AG04450 (cell line): ENCODE measurements at regions of chr20 and their contacts with region 1.

Region 1: GRCh38 chr20:3710703-3711483 is 1.5 kb downstream of the SIGLEC1 start:
- DNase-seq: no peak
- H3K4me3 ChIP-seq: no peak overlapping the region
- H3K27ac ChIP-seq: no peak overlapping the region
- H3K27me3 ChIP-seq: peaks cover 13% of the 10 kb centered on the region
- CTCF ChIP-seq: peak; percentile 93

Region 2: GRCh38 chr20:3646651-3647050 is 64.2 kb before region 1 on chr20:
- CTCF ChIA-PET with region 1: no interaction called
- POLR2A ChIA-PET with region 1: no interaction called
- DNase-seq: no peak
- H3K4me3 ChIP-seq: no peak overlapping the region
- H3K27ac ChIP-seq: no peak overlapping the region
- H3K27me3 ChIP-seq: no peaks in the 10 kb centered on the region
- CTCF ChIP-seq: no peak

Region 3: GRCh38 chr20:3670511-3670910 is 40.4 kb before region 1 on chr20:
- CTCF ChIA-PET with region 1: interaction called, 110 read pairs
- POLR2A ChIA-PET with region 1: no interaction called
- DNase-seq: no peak
- H3K4me3 ChIP-seq: no peak overlapping the region
- H3K27ac ChIP-seq: no peak overlapping the region
- H3K27me3 ChIP-seq: no peaks in the 10 kb centered on the region
- CTCF ChIP-seq: peak; percentile 38; the same call in 1 of the 2 replicates

Region 4: GRCh38 chr20:3686867-3687321 is 24.0 kb before region 1 on chr20:
- CTCF ChIA-PET with region 1: interaction called, 16 read pairs
- POLR2A ChIA-PET with region 1: interaction called, 4 read pairs
- DNase-seq: peak; percentile 82
- H3K4me3 ChIP-seq: no peak overlapping the region
- H3K27ac ChIP-seq: peak overlapping the region; percentile 69
- H3K27me3 ChIP-seq: no peaks in the 10 kb centered on the region
- CTCF ChIP-seq: peak; percentile 33

Region 5: DNA sequence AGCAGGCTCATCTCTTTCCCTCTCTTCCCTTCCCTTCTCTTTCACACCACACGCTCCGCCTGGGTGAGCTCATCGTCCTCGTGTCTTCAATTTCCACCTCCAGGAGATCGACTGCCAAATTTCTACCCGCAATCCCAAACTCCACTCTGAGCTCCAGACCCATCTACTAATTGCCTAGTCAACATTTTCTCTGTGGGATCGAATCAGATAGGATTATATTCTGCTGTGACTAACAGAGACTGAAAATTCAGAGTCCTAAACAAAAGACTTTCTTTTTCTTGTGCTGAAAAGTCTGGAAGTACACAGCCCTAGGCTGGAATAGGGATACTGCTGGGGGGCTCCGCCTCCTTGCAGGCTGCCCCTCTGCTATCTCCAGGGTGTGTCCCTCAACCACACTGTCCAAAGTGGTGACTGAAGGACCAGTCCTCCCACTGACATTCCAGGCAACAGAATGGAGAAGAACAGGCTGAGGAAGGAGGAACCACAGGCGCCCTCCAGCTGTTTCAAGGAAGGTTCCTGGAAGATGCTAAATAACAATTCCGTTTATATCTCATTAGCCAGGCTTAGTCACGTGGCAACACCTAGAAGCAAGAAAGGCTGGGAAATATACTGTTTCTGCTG is 16.6 kb after region 1 on chr20:
- CTCF ChIA-PET with region 1: interaction called, 26 read pairs
- POLR2A ChIA-PET with region 1: no interaction called
- DNase-seq: no peak
- H3K4me3 ChIP-seq: peak overlapping the region; percentile 21
- H3K27ac ChIP-seq: peak overlapping the region; percentile 42
- H3K27me3 ChIP-seq: peaks cover 49% of the 10 kb centered on the region
- CTCF ChIP-seq: 0 out of 2 replicates have a peak, but pooled peaks have one; percentile 6